ENCODE measurements at regions of chr19 and their contacts with region 1.

Region 1: GRCh38 chr19:14136509-14137281 is at the start of gene ASF1B:
- DNase-seq: peak; percentile 100
- H3K4me3 ChIP-seq: peak within 1 kb of the TSS; percentile 72 to 99 (median 91)
- H3K27ac ChIP-seq: peak within 1 kb of the TSS; percentile 67
- H3K4me1 ChIP-seq: peaks cover 4% of the 10 kb centered on the region
- H3K27me3 ChIP-seq: no peaks in the 10 kb centered on the region
- CTCF ChIP-seq: peak; percentile 60 to 91
- total RNA-seq, gene ASF1B: 2.5 to 23.4 TPM

Region 2: DNA sequence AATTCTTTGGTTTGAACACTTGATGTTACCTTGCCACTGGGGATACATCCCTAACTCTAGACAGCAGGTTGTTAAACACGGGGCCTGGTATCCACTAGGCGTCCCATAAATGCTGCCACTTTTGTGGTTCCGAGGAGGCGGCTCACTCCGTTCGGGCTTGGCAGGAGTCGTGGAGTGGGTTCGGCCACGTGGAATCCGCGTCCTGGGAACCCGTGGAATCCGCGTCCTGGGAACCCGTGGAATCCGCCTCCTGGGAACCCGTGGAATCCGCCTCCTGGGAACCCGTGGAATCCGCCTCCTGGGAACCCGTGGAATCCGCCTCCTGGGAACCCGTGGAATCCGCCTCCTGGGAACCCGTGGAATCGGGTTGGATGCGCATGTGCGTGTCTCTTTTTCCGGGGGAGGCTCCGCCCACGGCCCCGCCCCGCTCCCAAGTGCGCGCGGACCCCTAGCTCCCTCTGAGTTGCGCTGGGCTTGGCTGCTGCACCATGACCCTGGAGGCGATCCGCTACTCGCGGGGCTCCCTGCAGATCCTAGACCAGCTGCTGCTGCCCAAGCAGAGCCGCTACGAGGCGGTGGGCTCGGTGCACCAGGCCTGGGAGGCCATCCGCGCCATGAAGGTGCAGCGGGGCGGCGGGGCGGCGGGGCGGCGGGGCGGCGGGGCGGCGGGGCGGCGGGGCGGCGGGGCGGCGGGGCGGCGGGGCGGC is 372.4 kb before region 1 on chr19 and contains the start of gene MRI1:
- CTCF ChIA-PET with region 1: no interaction called
- dilution Hi-C with region 1: no loop called
- in situ Hi-C with region 1: no loop called
- intact Hi-C with region 1: no loop called
- DNase-seq: peak; percentile 43
- H3K4me3 ChIP-seq: peak within 1 kb of the TSS; percentile 82 to 99 (median 89)
- H3K27ac ChIP-seq: peak within 1 kb of the TSS; percentile 24
- H3K4me1 ChIP-seq: peaks cover 4% of the 10 kb centered on the region
- H3K27me3 ChIP-seq: no peaks in the 10 kb centered on the region
- CTCF ChIP-seq: peak in 1 of 2 donors; percentile 12
- total RNA-seq, gene MRI1: 29.0 to 36.7 TPM

Region 3: GRCh38 chr19:14006243-14006765 is 130.4 kb before region 1 on chr19 and contains the start of gene RFX1:
- CTCF ChIA-PET with region 1: no interaction called
- dilution Hi-C with region 1: no loop called
- in situ Hi-C with region 1: no loop called
- intact Hi-C with region 1: loop called (anchors 1 kb)
- DNase-seq: peak; percentile 100
- H3K4me3 ChIP-seq: peak within 1 kb of the TSS; percentile 72 to 96 (median 73)
- H3K27ac ChIP-seq: peak within 1 kb of the TSS; percentile 99
- H3K4me1 ChIP-seq: peaks cover 16% of the 10 kb centered on the region
- H3K27me3 ChIP-seq: no peaks in the 10 kb centered on the region
- CTCF ChIP-seq: no peak
- total RNA-seq, gene RFX1: 2.7 to 12.0 TPM

Region 4: GRCh38 chr19:14081325-14082093 is 55.2 kb before region 1 on chr19:
- CTCF ChIA-PET with region 1: interaction called, 3 read pairs
- dilution Hi-C with region 1: loop called (anchors 5 kb)
- in situ Hi-C with region 1: no loop called
- intact Hi-C with region 1: loop called (anchors 2 kb)
- DNase-seq: peak; percentile 98
- H3K4me3 ChIP-seq: peak overlapping the region; percentile 68 to 95 (median 72)
- H3K27ac ChIP-seq: peak overlapping the region; percentile 79
- H3K4me1 ChIP-seq: peaks cover 9% of the 10 kb centered on the region
- H3K27me3 ChIP-seq: no peaks in the 10 kb centered on the region
- CTCF ChIP-seq: no peak

Region 5: DNA sequence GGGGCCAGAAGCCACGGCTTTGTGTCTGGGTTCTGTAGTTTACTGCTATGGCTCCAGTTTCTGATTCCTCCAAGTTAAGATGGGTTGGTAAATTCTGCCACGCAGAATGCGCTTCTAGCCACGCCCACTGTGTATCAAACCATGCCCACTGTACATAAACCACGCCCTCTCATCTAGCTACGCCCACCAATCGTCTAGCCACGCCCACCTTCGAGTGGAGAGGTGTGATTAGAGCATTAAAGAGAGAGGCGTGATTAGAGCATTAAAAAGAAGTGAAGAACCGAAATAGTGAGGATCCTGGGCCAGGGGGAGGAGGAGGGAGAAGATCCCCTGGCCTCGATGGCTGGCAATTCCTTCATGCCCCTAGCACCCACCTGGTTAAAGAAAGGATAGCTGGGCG is 200.8 kb after region 1 on chr19:
- CTCF ChIA-PET with region 1: no interaction called
- dilution Hi-C with region 1: loop called (anchors 5 kb)
- in situ Hi-C with region 1: no loop called
- intact Hi-C with region 1: no loop called
- DNase-seq: no peak
- H3K4me3 ChIP-seq: no peak overlapping the region
- H3K27ac ChIP-seq: no peak overlapping the region
- H3K4me1 ChIP-seq: peaks cover 6% of the 10 kb centered on the region
- H3K27me3 ChIP-seq: no peaks in the 10 kb centered on the region
- CTCF ChIP-seq: no peak

Region 6: GRCh38 chr19:14405758-14406644 is 269.3 kb after region 1 on chr19:
- CTCF ChIA-PET with region 1: interaction called, 6 read pairs
- dilution Hi-C with region 1: loop called (anchors 5 kb)
- in situ Hi-C with region 1: no loop called
- intact Hi-C with region 1: loop called (anchors 1 kb)
- DNase-seq: peak; percentile 63
- H3K4me3 ChIP-seq: peak overlapping the region in 1 of 3 experiments; percentile 38
- H3K27ac ChIP-seq: no peak overlapping the region
- H3K4me1 ChIP-seq: peaks cover 4% of the 10 kb centered on the region
- H3K27me3 ChIP-seq: no peaks in the 10 kb centered on the region
- CTCF ChIP-seq: peak; percentile 44 to 84

Region 7: DNA sequence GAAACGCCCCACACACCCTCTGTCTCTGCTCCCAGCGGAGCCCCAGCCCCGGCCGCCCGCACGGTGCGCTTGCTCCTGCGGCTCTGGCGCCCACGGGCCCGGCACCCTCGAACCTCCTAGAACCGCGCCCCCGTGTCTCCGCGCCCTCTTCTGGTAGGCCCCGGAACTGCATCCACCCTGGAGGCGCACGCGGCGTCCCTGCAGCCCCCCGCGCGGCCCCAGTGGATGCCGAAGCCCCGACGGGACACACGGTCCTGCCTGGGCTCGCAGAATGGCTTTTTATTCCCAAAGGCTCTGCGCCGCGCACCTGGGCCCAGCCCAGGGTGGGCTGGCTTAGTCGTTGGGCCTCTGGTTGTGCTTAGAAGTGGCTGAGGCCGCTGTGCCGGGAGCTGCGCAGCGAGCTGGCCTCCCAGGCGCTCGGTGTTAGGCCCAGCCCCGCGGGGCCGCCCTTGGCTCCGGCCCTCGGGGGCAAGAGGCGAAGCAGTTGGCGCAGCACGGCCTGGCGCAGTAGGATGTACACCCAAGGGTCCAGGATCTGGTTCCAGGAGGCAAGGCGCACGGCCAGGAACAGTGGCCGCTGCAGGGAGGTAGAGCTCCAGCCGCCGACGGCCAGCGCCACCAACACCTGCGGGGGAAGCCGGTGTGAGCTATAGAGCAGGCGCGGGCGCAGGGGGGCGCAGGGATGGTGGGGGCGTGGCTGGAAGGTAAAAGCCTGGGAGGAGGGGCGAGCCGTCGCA is 335.7 kb after region 1 on chr19:
- CTCF ChIA-PET with region 1: no interaction called
- dilution Hi-C with region 1: no loop called
- in situ Hi-C with region 1: no loop called
- intact Hi-C with region 1: loop called (anchors 2 kb)
- DNase-seq: no peak
- H3K4me3 ChIP-seq: no peak overlapping the region
- H3K27ac ChIP-seq: no peak overlapping the region
- H3K4me1 ChIP-seq: peaks cover 28% of the 10 kb centered on the region
- H3K27me3 ChIP-seq: no peaks in the 10 kb centered on the region
- CTCF ChIP-seq: peak; percentile 68 to 93

Region 8: DNA sequence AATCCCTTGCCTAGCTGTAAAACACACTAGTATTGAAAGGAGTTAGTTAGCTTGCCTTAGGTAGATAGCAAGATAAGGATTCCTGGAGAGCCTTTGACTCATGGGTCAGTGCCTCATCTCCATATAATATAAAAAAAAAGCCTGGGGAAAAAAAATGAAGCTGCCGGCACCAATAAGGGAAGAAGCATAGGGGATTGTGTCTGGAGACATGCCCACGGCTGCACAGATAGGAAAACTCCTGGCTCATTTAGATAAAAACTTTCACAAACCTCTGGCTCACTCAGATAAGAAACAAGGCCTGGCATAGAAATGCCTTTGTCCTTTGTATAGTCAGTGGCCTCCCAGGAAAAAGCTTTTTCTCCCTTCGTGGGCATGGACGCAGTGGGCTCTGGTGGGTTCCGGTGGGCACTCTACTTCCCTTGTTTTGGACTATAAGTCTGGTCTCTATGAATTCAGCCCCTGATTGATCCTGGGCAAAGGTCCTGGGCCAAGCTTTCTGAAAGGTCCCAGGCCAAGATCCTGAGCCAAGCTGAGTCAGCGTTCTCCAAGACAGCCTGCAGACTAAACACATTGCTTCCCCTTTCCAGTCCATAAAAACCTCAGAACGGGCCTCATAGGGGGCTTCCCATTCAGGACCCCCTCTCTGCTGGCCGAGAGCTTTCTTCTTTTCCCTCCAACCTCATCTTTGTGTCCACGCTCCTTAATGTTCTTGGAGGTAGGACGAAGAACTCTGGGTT is 754.1 kb after region 1 on chr19:
- CTCF ChIA-PET with region 1: no interaction called
- dilution Hi-C with region 1: no loop called
- in situ Hi-C with region 1: no loop called
- intact Hi-C with region 1: loop called (anchors 5 kb)
- DNase-seq: no peak
- H3K4me3 ChIP-seq: no peak overlapping the region
- H3K27ac ChIP-seq: no peak overlapping the region
- H3K4me1 ChIP-seq: no peaks in the 10 kb centered on the region
- H3K27me3 ChIP-seq: no peaks in the 10 kb centered on the region
- CTCF ChIP-seq: no peak